Aorta (tissue), 5 donors: ENCODE measurements at regions of chr3 and their contacts with region 1.

Region 1: GRCh38 chr3:171646357-171647133 is 163.7 kb downstream of the PLD1 start:
- DNase-seq: no peak
- ATAC-seq: peak; percentile 70
- H3K4me3 ChIP-seq: no peak overlapping the region
- H3K27ac ChIP-seq: peak overlapping the region in 1 of 2 donors; percentile 44
- H3K4me1 ChIP-seq: peaks cover 0 to 4% of the 10 kb centered on the region in 2 donors
- H3K27me3 ChIP-seq: no peaks in the 10 kb centered on the region

Region 2: DNA sequence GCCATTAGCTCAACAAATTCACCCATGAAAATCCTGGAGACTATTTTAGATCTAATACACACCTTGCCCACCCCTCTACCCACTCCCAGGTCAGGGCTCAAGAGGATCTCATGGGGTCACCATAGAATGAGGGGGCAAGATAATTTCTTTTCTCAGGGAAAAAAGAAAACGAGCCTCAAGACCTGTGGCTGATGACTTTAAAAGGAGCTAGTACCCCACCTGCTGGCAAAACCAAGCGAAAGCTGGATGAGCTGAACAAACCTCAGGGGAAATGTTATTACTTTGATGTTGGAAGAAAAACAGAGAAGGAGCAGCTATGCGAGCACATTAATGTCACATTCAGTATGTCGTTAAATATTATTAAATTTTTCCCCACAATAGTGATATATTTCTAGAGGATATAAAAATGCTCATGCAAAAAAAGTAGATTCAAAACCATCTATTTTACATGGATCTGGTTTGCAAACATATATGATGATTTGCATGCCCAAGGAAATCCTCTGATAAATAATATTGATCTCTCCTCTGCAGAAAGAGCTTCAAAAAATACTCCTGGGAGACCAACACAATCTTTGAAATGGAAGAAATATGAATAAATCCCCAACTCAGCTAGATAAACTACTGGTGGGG is 126.0 kb after region 1 on chr3:
- intact Hi-C with region 1: loop called (anchors 2 kb)
- DNase-seq: peak in 1 of 2 donors; percentile 69
- ATAC-seq: peak; percentile 58
- H3K4me3 ChIP-seq: no peak overlapping the region
- H3K27ac ChIP-seq: no peak overlapping the region
- H3K4me1 ChIP-seq: peaks cover 4 to 5% of the 10 kb centered on the region in 2 donors
- H3K27me3 ChIP-seq: no peaks in the 10 kb centered on the region

Region 3: GRCh38 chr3:171890398-171890797 is 243.9 kb after region 1 on chr3:
- intact Hi-C with region 1: no loop called
- DNase-seq: no peak
- ATAC-seq: no peak
- H3K4me3 ChIP-seq: no peak overlapping the region
- H3K27ac ChIP-seq: no peak overlapping the region
- H3K4me1 ChIP-seq: no peaks in the 10 kb centered on the region
- H3K27me3 ChIP-seq: no peaks in the 10 kb centered on the region

Region 4: GRCh38 chr3:172341482-172342059 is 695.0 kb after region 1 on chr3:
- intact Hi-C with region 1: loop called (anchors 5 to 10 kb)
- DNase-seq: no peak
- ATAC-seq: peak; percentile 85
- H3K4me3 ChIP-seq: no peak overlapping the region
- H3K27ac ChIP-seq: no peak overlapping the region
- H3K4me1 ChIP-seq: no peaks in the 10 kb centered on the region
- H3K27me3 ChIP-seq: no peaks in the 10 kb centered on the region

Region 5: DNA sequence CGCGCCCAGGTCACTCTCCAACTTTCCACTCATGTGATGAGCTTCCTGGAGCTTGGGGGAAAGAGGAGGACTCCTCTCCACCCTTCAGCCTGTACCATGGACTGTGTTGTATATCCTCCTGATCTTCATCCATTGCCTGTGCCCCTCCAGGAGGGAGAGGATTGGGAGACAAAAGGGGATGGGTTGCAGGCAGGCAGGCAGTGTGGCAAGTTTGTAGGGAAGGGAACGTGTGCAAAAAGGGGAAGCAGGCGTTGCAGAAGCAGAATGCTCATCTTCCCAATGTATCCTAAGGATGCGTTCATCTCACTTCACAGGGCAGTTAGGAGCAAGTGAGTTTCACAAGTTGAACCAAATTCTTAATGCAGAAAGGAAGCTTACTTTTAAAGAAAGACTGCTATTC is 829.8 kb after region 1 on chr3:
- intact Hi-C with region 1: loop called in 1 of 2 experiments (anchors 5 kb)
- DNase-seq: no peak
- ATAC-seq: no peak
- H3K4me3 ChIP-seq: no peak overlapping the region
- H3K27ac ChIP-seq: no peak overlapping the region
- H3K4me1 ChIP-seq: no peaks in the 10 kb centered on the region
- H3K27me3 ChIP-seq: no peaks in the 10 kb centered on the region